ENCODE measurements at regions of chr1 and their contacts with region 1.

Region 1: GRCh38 chr1:27603681-27604578 is at the start of gene AHDC1:
- DNase-seq: peak; percentile 94
- H3K4me3 ChIP-seq: peak within 1 kb of the TSS; percentile 76 to 90
- H3K27ac ChIP-seq: peak within 1 kb of the TSS; percentile 93 to 96
- H3K4me1 ChIP-seq: peaks cover 9% of the 10 kb centered on the region
- H3K27me3 ChIP-seq: no peaks in the 10 kb centered on the region
- CTCF ChIP-seq: peak; percentile 19 to 61 (median 48)
- POLR2A ChIP-seq: peak; percentile 95
- total RNA-seq, gene AHDC1: 27.1 to 83.7 TPM

Region 2: GRCh38 chr1:27300341-27301051 is 303.4 kb before region 1 on chr1:
- intact Hi-C with region 1: loop called (anchors 5 kb)
- DNase-seq: peak; percentile 79
- H3K4me3 ChIP-seq: no peak overlapping the region
- H3K27ac ChIP-seq: peak overlapping the region; percentile 77 to 84
- H3K4me1 ChIP-seq: peaks cover 4% of the 10 kb centered on the region
- H3K27me3 ChIP-seq: no peaks in the 10 kb centered on the region
- CTCF ChIP-seq: peak; percentile 95 to 99 (median 98)
- POLR2A ChIP-seq: no peak

Region 3: DNA sequence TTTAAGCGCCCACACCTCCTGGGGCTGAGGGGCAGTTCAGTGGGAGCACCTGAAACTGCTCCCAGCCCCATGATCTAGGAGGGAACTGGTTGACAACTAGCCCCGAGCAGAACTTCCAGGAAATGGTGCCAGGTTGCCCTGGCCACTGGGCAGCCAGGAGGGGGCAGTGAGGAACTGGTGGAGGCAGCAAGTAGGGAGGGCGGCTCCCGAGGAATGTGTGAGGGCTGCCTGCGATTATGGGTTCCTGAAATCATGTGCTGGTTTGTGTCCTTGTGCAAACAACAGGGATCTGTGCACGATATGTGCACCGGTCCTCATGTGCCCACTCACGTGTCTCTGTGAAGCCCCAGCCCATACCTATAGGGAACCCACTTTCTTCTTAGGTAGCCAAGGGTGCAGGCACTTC is 201.6 kb before region 1 on chr1:
- intact Hi-C with region 1: loop called (anchors 2 kb)
- DNase-seq: peak; percentile 83
- H3K4me3 ChIP-seq: no peak overlapping the region
- H3K27ac ChIP-seq: peak overlapping the region; percentile 70 to 77
- H3K4me1 ChIP-seq: peaks cover 39% of the 10 kb centered on the region
- H3K27me3 ChIP-seq: no peaks in the 10 kb centered on the region
- CTCF ChIP-seq: peak in 3 of 4 experiments; percentile 73 to 89 (median 82)
- POLR2A ChIP-seq: no peak

Region 4: GRCh38 chr1:27416387-27417111 is 187.4 kb before region 1 on chr1:
- intact Hi-C with region 1: loop called (anchors 5 kb)
- DNase-seq: no peak
- H3K4me3 ChIP-seq: no peak overlapping the region
- H3K27ac ChIP-seq: peak overlapping the region; percentile 64 to 68
- H3K4me1 ChIP-seq: peaks cover 11% of the 10 kb centered on the region
- H3K27me3 ChIP-seq: no peaks in the 10 kb centered on the region
- CTCF ChIP-seq: peak in 3 of 4 experiments; percentile 41 to 68 (median 63)
- POLR2A ChIP-seq: no peak

Region 5: DNA sequence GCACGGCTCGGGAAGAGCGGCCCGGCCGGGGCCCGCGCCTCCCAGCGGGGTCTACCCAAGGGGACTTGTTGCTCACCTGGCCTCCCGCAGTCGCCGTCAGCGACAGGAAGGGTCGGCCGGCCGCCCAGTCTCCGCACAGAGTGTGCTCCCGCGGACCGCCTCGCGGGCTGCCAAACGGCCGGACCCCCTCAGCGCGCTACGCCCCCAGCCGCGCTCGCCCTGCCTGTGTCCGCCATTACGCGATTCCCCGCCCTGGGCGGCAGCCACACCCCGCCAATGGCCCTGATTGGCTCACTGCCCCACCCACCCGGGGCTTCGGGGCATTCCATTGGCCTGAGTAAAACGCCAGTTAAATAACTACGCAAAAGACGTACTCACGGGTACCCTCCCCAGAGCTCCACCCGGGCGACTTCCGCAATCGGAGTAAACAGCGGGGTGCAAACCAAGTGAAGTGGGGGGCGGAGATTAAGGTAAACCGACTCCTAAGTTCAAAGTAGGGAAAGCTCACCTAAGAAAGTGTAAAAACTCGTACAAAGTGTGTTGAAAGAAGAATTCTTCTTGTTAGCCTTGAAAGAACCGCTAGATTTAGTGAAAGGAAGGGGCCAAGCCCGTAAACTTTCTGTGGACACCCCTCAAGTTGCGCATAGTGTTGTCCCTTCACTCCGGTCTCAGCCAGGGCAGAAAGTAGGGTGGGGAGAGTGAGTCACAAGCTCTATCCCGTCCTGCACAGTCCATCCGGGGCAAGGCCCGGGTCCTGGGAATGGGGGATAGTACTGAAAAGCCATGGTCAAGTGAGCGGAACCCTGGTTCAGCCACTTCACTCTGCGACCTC is 113.8 kb before region 1 on chr1 and contains the start of gene WASF2:
- intact Hi-C with region 1: loop called (anchors 5 kb)
- DNase-seq: peak; percentile 97
- H3K4me3 ChIP-seq: peak within 1 kb of the TSS; percentile 99
- H3K27ac ChIP-seq: peak within 1 kb of the TSS; percentile 100
- H3K4me1 ChIP-seq: peaks cover 9% of the 10 kb centered on the region
- H3K27me3 ChIP-seq: no peaks in the 10 kb centered on the region
- CTCF ChIP-seq: peak in 1 of 4 experiments; percentile 35
- POLR2A ChIP-seq: peak; percentile 100
- total RNA-seq, gene WASF2: 42.0 to 63.6 TPM

Region 6: DNA sequence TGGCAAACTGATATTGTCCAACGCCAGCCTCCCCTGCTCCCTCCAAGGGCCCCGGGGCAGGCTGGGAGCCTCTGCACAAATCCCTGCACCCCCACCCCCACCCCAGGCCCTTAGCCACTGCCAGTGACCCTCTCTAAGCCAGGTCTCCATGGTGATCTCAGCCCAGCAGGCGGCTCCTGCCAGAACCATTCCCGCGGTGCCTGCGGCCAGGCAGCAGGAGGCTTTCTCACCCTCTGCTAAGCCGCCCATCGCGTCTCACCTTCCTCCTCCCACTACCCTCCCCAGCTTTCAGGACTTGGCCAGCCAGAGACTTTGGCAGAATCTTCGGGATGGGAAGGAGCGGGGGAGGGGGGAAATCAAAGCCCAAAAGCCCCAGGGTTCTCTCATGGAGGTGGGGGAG is 67.2 kb before region 1 on chr1:
- intact Hi-C with region 1: no loop called
- DNase-seq: no peak
- H3K4me3 ChIP-seq: no peak overlapping the region
- H3K27ac ChIP-seq: peak overlapping the region; percentile 52 to 63
- H3K4me1 ChIP-seq: peaks cover 10% of the 10 kb centered on the region
- H3K27me3 ChIP-seq: no peaks in the 10 kb centered on the region
- CTCF ChIP-seq: no peak
- POLR2A ChIP-seq: no peak

Region 7: DNA sequence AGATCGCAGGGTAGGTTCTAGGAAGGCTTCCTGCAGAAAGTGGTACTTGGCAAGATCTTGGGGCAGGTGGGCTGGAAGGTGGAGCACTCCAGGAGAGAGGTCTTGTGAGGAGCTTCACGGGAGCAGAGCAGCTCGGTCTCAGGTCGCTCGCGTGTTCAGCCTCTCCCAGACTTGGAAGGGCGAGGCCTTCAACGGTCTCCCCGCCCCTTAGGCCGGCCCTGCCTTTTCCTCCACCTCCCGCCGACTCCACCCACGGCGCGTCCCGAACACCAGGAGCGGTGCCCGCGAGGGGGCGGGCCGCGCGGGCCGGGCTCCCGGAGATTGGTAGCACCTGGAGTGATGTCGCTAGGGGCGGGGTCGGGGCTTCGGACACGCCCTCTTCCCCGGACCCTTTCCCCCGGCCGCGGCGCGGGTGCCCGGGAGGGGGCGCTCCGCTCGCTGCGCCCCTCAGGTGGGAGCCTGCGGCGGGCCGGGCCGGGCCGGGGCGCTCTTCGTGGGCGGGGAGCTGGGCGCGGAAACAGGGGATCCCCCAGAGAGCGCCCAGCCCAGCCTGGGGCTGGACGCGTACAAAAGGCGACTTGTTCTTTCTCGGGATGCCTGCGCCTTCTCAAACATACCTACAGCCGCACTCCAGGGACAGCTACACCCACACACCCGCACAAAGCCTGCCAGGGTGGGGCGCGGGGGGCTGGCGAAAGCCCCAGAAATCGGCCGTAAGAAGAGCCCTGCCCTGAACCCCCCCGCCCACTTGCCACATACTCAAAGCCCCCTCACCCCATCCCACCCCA is 35.4 kb before region 1 on chr1:
- intact Hi-C with region 1: loop called (anchors 2 kb)
- DNase-seq: peak; percentile 97
- H3K4me3 ChIP-seq: peak overlapping the region; percentile 27 to 30
- H3K27ac ChIP-seq: peak overlapping the region; percentile 86 to 91
- H3K4me1 ChIP-seq: peaks cover 39% of the 10 kb centered on the region
- H3K27me3 ChIP-seq: no peaks in the 10 kb centered on the region
- CTCF ChIP-seq: peak; percentile 89 to 96 (median 94)
- POLR2A ChIP-seq: peak; percentile 91

Region 8: DNA sequence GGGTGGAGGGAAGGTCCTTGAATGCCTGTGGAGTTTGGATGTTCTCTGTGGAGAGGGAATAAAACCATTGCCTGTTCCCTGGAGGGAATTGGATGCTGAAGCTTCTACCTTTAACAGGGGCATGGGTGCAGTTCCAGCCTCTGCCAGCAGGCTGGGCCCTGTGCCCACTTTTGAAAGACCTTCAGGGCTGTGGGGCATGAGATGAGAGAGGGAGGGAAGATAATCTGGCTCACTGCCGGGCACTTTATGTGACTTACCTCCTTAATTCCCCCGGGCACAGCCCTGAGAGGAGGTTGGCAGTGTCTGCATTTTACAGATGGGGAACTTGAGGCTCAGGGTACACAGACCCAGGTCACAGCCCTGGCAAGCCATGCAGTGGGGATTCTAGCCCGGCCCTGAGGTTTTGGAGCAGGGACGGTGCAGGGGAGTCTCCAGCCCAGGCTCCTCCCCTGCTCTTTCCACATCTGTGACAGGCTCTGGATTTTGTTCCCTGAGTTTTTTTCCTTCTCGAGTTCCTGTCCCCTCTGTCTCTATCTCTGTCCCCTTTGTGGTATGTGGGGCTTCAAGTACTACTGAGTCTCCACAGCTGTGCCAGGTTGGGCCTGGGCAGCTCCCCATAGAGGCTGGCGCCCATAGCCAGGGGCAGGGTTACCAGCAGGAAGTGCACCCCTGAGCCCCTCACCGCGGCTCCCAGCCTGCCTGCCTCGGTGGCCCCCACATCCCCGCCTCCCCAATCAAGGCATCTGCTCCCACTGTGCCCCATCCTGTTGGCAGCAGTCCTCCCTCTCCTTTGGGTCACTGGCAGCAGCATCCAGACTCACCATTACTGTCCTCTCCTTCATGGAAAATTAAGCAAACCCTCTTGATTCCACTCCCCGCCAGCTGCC is 254.4 kb after region 1 on chr1:
- intact Hi-C with region 1: no loop called
- DNase-seq: peak; percentile 79
- H3K4me3 ChIP-seq: no peak overlapping the region
- H3K27ac ChIP-seq: no peak overlapping the region
- H3K4me1 ChIP-seq: no peaks in the 10 kb centered on the region
- H3K27me3 ChIP-seq: no peaks in the 10 kb centered on the region
- CTCF ChIP-seq: peak; percentile 76 to 95 (median 85)
- POLR2A ChIP-seq: no peak

Measured in prostate gland (tissue), 2 donors.